ENCODE measurements at regions of chr7 and their contacts with region 1.

Region 1: GRCh38 chr7:140175221-140176121 is 1.3 kb downstream of the KDM7A start:
- DNase-seq: peak; percentile 91 to 96 (median 91)
- H3K4me3 ChIP-seq: peak overlapping the region; percentile 36 to 93 (median 90)
- H3K4me3 Mint-ChIP-seq: peak overlapping the region; percentile 82 to 83
- H3K27ac ChIP-seq: peak overlapping the region; percentile 74 to 95
- H3K27ac Mint-ChIP-seq: peak overlapping the region; percentile 92 to 97 (median 95)
- H3K4me1 ChIP-seq: peaks cover 31 to 40% of the 10 kb centered on the region in 2 donors
- H3K4me1 Mint-ChIP-seq: peaks cover 51% of the 10 kb centered on the region
- H3K27me3 ChIP-seq: peaks cover 0 to 4% of the 10 kb centered on the region in 2 donors
- H3K27me3 Mint-ChIP-seq: peaks cover 2 to 14% (median 5%) of the 10 kb centered on the region in 3 donors
- CTCF ChIP-seq: peak; percentile 52

Region 2: DNA sequence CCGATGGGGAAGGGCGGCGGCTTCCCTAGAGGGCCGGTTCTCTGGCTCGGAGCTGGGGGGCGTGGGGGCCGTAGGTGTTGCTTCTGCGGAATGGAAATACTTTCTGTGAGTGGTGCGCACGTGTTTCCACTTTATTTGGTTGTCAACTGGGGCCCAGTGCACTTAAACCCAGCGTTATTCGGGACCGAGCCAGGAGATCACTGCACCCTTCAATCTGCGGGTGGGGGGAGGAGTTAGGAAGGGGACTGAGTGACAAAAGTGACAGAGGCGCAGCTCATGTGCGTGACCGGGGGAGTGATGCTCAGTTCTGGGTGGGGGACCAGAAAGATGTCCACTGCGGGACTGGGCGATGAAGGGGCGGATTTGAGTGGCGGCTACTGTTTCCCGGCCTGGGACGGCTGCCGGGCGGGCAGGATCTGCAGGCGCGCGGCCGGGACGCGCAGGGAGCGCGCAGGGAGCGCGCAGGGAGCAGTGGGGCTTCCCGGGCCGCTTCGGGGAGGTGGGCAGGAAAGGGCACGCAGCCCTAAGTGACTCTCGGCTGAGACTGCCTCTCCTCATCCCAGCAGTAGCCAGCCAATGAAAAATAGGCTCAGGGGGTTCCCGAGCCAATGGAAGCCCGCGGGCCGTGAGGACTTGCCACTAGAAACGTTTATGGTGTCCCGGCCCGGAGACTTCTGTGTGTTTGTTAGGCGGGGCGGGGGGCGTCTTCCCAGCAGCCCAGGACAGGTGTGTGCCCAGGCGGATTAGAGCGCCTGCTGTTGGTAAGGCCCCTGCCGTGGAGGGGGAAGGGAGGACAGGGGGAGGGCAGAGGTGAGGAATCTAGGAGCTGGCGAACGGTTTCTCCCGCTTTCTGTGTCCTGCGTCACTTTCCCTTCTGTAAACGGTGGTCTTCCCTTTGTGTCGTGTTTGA is 55.6 kb after region 1 on chr7:
- intact Hi-C with region 1: loop called (anchors 5 kb)
- DNase-seq: peak; percentile 47 to 80 (median 54)
- H3K4me3 ChIP-seq: peak overlapping the region; percentile 49 to 82 (median 68)
- H3K4me3 Mint-ChIP-seq: peak overlapping the region; percentile 95 to 98
- H3K27ac ChIP-seq: peak overlapping the region; percentile 91 to 92
- H3K27ac Mint-ChIP-seq: peak overlapping the region; percentile 93 to 99 (median 96)
- H3K4me1 ChIP-seq: peaks cover 49 to 67% of the 10 kb centered on the region in 2 donors
- H3K4me1 Mint-ChIP-seq: peaks cover 42% of the 10 kb centered on the region
- H3K27me3 ChIP-seq: peaks cover 0 to 14% of the 10 kb centered on the region in 2 donors
- H3K27me3 Mint-ChIP-seq: peaks cover 5 to 21% (median 18%) of the 10 kb centered on the region in 3 donors
- CTCF ChIP-seq: no peak

Region 3: DNA sequence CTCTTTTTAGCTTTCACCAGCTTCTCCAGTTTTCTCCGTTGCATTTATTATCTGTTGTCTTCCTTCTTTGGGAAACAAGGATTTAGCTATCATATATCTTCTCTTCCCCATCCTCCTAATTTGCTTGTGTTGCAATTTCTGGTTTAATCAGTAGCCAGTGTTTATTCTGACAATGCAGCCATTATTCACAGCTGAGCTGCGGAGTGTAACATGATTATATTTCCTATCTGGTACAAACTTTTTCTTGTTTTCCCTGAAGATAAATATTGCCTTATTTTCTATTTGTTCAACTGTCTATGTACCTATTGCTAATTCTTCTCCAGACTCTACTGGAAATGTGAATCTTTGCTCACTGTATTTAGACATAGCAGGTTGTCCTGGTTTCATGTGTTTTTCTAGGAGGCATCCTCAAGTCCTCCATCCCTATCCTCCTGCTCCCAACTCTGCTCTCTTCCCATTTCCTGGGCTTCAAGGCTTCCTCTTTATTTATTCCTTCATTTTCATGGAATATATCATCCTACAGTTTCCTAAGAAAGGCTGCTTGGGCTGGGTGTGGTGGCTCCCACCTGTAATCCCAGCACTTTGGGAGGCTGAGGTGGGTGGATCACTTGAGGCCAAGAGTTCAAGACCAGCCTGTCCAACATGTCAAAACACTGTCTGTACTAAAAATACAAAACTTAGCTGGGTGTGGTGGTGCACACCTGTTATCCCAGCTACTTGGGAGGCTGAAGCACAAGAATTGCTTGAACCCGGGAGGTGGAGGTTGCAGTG is 73.8 kb after region 1 on chr7:
- intact Hi-C with region 1: loop called in 1 of 2 experiments (anchors 1 kb)
- DNase-seq: no peak
- H3K4me3 ChIP-seq: no peak overlapping the region
- H3K4me3 Mint-ChIP-seq: no peak overlapping the region
- H3K27ac ChIP-seq: no peak overlapping the region
- H3K27ac Mint-ChIP-seq: peak overlapping the region in 3 of 7 donors; percentile 21 to 68 (median 34)
- H3K4me1 ChIP-seq: peaks cover 53 to 59% of the 10 kb centered on the region in 2 donors
- H3K4me1 Mint-ChIP-seq: peaks cover 53% of the 10 kb centered on the region
- H3K27me3 ChIP-seq: no peaks in the 10 kb centered on the region
- H3K27me3 Mint-ChIP-seq: peaks cover 0 to 5% (median 0%) of the 10 kb centered on the region in 3 donors
- CTCF ChIP-seq: no peak

Region 4: DNA sequence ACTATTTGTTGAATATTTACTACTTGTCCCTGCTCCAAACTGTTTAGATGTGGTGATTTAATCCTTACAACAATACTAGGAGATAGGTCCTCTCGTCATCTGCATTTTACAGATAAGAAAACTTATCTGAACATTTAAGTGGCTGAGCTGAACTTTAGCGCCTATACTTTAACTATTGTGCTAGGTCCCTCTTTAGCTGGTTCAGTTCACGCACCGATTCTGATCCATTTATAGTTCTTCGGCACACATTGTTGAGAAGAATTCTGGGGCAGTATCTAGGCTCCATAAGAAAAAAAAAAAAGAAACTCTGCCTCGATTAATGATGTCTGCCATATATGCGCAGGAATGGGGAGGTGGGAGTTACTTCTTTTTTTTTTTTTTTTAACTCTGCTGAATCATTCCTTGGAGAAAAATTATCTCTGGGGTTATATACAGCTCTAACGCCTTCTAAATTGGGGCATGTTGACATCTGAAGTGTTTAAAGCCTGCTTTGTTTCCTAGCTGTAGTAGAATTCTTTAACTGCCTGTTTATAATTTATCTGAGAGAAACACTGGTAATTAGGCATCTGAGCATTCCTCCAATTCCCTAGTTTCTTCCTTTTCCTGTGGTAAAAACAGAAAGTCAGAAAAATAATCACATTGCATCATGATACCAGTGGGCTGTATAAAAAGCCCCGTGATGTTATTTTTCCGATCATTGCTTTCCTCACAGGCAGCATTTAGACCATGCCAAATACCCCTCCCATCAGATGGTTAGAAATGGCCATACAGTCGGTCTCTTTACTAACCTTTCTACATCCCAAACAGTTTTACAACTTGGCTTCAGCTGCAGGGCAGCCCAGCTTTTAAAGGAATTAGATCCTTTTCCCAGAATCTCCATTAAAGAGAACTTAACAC is 99.8 kb after region 1 on chr7:
- intact Hi-C with region 1: no loop called
- DNase-seq: no peak
- H3K4me3 ChIP-seq: no peak overlapping the region
- H3K4me3 Mint-ChIP-seq: peak overlapping the region in 1 of 2 donors; percentile 20
- H3K27ac ChIP-seq: no peak overlapping the region
- H3K27ac Mint-ChIP-seq: no peak overlapping the region
- H3K4me1 ChIP-seq: peaks cover 0 to 4% of the 10 kb centered on the region in 2 donors
- H3K4me1 Mint-ChIP-seq: peaks cover 3% of the 10 kb centered on the region
- H3K27me3 ChIP-seq: no peaks in the 10 kb centered on the region
- H3K27me3 Mint-ChIP-seq: peaks cover 9 to 22% (median 11%) of the 10 kb centered on the region in 3 donors
- CTCF ChIP-seq: no peak

Region 5: DNA sequence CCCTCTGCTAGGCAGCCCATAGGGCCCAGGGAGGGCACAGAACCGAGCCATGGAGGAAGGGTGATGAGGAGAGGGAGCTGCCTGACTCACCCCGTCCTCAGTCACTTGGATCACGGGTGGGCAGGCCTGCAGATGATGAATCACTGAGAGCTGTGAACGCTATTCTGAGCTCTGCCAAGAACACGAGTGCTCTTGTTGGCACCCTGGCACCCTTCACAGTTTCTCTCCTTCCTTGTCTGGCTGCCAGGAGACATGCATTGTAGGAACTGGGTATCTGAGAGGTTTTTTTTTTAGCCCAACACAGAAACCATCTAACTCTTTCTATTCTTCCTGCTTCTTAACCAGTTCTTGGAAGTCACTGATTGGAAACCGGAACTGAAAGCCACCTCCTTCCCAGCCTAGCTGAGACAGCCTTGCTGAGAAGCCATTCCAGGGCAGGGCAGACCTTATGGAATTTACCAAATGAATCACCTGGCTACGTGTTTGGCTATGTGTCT is 140.7 kb after region 1 on chr7:
- intact Hi-C with region 1: loop called in 1 of 2 experiments (anchors 5 kb)
- DNase-seq: peak; percentile 93 to 98 (median 97)
- H3K4me3 ChIP-seq: peak overlapping the region; percentile 19 to 65 (median 32)
- H3K4me3 Mint-ChIP-seq: peak overlapping the region; percentile 56 to 88
- H3K27ac ChIP-seq: peak overlapping the region; percentile 92 to 95
- H3K27ac Mint-ChIP-seq: peak overlapping the region; percentile 90 to 97 (median 96)
- H3K4me1 ChIP-seq: peaks cover 85 to 95% of the 10 kb centered on the region in 2 donors
- H3K4me1 Mint-ChIP-seq: peaks cover 88% of the 10 kb centered on the region
- H3K27me3 ChIP-seq: no peaks in the 10 kb centered on the region
- H3K27me3 Mint-ChIP-seq: peaks cover 0 to 6% (median 0%) of the 10 kb centered on the region in 3 donors
- CTCF ChIP-seq: no peak

Region 6: GRCh38 chr7:140326116-140326928 is 150.9 kb after region 1 on chr7:
- intact Hi-C with region 1: loop called in 1 of 2 experiments (anchors 2 kb)
- DNase-seq: peak; percentile 58 to 65 (median 65)
- H3K4me3 ChIP-seq: peak overlapping the region in 2 of 3 experiments; percentile 20 to 56
- H3K4me3 Mint-ChIP-seq: no peak overlapping the region
- H3K27ac ChIP-seq: no peak overlapping the region
- H3K27ac Mint-ChIP-seq: peak overlapping the region in 1 of 7 donors; percentile 85
- H3K4me1 ChIP-seq: peaks cover 10 to 11% of the 10 kb centered on the region in 2 donors
- H3K4me1 Mint-ChIP-seq: peaks cover 4% of the 10 kb centered on the region
- H3K27me3 ChIP-seq: no peaks in the 10 kb centered on the region
- H3K27me3 Mint-ChIP-seq: peaks cover 0 to 7% (median 6%) of the 10 kb centered on the region in 3 donors
- CTCF ChIP-seq: peak; percentile 80

Measured in CD14-positive monocyte (primary cell).